ENCODE measurements at regions of chr16 and their contacts with region 1.

Region 1: GRCh38 chr16:24721830-24722238 is 7.6 kb upstream of the TNRC6A start:
- DNase-seq: peak; percentile 71
- H3K4me3 Mint-ChIP-seq: peak overlapping the region; percentile 39
- H3K27ac Mint-ChIP-seq: peak overlapping the region; percentile 83
- H3K4me1 Mint-ChIP-seq: peaks cover 18% of the 10 kb centered on the region
- H3K27me3 Mint-ChIP-seq: peaks cover 5% of the 10 kb centered on the region

Region 2: DNA sequence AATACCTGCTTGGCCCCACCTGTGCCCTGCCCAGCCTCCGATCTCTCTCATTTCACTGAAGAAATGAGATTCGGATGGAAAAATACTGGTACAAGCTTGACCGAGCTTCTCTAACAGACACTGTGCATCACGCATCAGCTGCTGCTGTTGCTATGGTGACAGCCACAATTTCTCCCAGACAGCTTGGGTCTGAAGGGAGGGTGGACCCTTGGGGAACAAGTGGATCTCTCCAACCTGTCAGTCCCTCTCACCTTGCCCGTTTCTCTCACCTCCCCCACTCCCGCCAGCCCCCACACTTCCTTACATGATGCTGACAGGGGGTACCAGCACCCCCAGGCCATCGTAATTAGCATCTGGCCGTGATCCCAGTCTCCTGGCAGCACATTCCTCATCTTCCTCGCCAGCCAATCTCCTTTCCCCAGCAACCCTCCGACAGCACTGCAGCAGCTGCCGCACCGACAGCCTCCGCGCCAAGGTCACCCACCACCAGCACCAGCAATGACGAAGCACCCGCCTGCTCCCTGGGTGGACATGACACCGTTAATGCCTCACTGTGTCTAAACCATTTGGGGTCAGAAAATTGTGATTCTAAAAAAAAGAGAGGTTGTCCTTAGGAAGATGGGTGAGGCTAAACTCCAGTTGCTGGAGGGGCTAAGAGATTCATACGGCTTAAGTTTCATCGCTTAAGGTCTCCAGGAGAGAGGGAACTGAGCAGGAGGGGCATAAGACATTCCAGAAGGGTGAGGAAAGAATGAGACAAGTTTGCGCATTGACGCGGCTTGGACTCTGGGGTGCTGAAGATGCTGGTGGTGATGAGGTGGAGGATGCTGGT is 51.0 kb before region 1 on chr16:
- intact Hi-C with region 1: loop called (anchors 1 kb)
- DNase-seq: no peak
- H3K4me3 Mint-ChIP-seq: peak overlapping the region; percentile 45
- H3K27ac Mint-ChIP-seq: peak overlapping the region; percentile 74
- H3K4me1 Mint-ChIP-seq: peaks cover 21% of the 10 kb centered on the region
- H3K27me3 Mint-ChIP-seq: peaks cover 6% of the 10 kb centered on the region

Region 3: GRCh38 chr16:24748242-24748641 is 26.4 kb after region 1 on chr16:
- intact Hi-C with region 1: no loop called
- DNase-seq: no peak
- H3K4me3 Mint-ChIP-seq: no peak overlapping the region
- H3K27ac Mint-ChIP-seq: no peak overlapping the region
- H3K4me1 Mint-ChIP-seq: peaks cover 56% of the 10 kb centered on the region
- H3K27me3 Mint-ChIP-seq: no peaks in the 10 kb centered on the region

Measured in activated CD4-positive, alpha-beta T cell treated with anti-CD3 and anti-CD28 coated beads, Interleukin-2, amount 10 ng/mL, durations not matched to agents 24 days and 14 days (primary cell).